OCI-LY7 (cell line): ENCODE measurements at regions of chr2 and their contacts with region 1.

Region 1: DNA sequence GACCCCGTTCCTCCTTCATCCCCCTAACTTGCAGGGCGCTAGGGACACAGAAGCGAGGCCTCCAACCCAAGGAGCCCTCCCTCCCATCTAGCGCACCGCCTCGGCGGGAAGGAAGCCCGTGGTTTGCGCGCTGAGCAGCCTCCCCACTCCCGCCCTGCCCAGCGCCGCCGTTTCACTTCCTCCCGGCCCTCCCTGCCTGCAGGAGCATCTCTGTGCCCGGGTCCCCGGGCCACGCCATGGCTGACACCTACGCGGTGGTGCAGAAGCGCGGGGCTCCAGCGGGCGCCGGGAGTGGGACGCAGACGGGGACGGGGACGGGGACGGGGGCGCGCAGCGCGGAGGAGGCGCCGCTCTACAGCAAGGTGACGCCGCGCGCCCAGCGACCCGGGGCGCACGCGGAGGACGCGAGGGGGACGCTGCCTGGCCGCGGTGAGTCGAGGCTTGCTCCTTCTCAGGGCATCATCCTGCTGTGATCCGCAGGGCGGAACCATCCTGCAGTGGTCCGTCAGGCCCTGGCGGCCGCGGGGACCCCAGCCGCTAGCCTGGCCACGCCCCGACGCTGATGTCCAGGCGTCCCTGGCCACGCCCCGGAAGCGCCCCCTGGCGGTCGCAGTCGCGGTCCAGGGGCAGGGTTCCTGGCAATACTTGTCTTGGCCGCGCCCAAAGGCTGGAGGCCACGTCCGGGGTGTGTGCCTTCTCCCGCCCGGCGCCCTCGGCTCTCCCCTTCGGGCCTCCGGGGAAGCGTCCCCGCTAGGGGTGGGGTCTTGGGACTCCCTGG is 16.4 kb downstream of the PTPN18 start:
- DNase-seq: peak; percentile 89
- H3K4me3 ChIP-seq: peak overlapping the region; percentile 93
- H3K27ac ChIP-seq: peak overlapping the region; percentile 90
- H3K4me1 ChIP-seq: peaks cover 70% of the 10 kb centered on the region
- CTCF ChIP-seq: peak; percentile 81

Region 2: GRCh38 chr2:130300258-130300969 is 71.8 kb before region 1 on chr2:
- CTCF ChIA-PET with region 1: no interaction called
- POLR2A ChIA-PET with region 1: no interaction called
- intact Hi-C with region 1: no loop called
- DNase-seq: no peak
- H3K4me3 ChIP-seq: no peak overlapping the region
- H3K27ac ChIP-seq: no peak overlapping the region
- H3K4me1 ChIP-seq: no peaks in the 10 kb centered on the region
- CTCF ChIP-seq: no peak

Region 3: DNA sequence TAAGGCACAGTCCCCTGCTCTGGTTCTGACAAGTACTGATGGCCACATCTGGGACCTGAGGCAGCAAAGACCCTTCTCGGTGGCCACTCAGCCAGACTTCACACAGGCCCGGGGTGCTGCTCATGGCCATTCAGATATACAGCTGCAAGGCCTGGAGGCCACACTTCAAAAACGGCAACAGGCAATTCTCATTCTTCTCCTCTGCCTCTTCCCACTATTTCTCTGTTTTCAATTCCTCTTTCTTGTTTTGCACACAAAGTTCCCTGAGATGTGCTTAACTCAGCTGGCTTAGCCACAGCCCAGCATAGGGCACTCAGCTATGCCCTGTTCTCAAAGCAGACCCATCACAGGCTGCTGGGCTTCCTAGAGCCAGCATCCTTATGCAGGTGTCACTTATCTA is 13.5 kb after region 1 on chr2:
- CTCF ChIA-PET with region 1: interaction called, 14 read pairs
- POLR2A ChIA-PET with region 1: interaction called, 209 read pairs
- intact Hi-C with region 1: loop called (anchors 1 kb)
- DNase-seq: peak; percentile 84
- H3K4me3 ChIP-seq: peak overlapping the region; percentile 21
- H3K27ac ChIP-seq: peak overlapping the region; percentile 100
- H3K4me1 ChIP-seq: peaks cover 90% of the 10 kb centered on the region
- CTCF ChIP-seq: no peak

Region 4: GRCh38 chr2:130391058-130391871 is 19.0 kb after region 1 on chr2:
- CTCF ChIA-PET with region 1: interaction called, 14 read pairs
- POLR2A ChIA-PET with region 1: interaction called, 209 read pairs
- intact Hi-C with region 1: loop called (anchors 1 kb)
- DNase-seq: peak; percentile 76
- H3K4me3 ChIP-seq: peak overlapping the region; percentile 61
- H3K27ac ChIP-seq: peak overlapping the region; percentile 100
- H3K4me1 ChIP-seq: peaks cover 73% of the 10 kb centered on the region
- CTCF ChIP-seq: no peak